ENCODE measurements at regions of chr5 and their contacts with region 1.

Region 1: DNA sequence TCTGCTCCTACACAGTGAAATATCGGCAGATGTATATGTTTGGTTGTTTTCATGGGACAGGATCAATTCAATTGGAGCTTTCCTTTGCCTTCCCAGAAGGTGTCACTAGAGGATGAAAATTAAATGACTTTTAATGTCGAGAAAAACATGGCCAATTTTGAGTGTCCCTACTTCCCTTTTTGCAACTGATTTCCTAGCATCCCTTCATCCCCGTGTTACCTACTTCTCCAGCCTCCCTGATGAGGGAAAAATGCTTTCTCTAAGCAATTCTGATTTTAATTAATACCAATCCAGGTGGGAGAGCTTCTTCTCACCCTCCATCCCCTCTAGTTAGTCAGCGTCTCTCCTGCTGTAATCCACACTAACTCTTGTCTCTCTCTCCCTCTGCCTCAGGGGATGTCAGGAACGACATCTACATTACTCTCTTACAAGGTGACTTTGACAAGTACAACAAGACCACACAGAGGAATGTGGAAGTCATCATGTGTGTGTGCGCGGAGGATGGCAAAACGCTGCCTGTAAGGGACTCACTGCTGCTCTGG is 64.9 kb downstream of the DOCK2 start:
- DNase-seq: no peak
- H3K4me3 Mint-ChIP-seq: no peak overlapping the region
- H3K27ac Mint-ChIP-seq: peak overlapping the region; percentile 59
- H3K4me1 Mint-ChIP-seq: peaks cover 41% of the 10 kb centered on the region
- H3K27me3 Mint-ChIP-seq: no peaks in the 10 kb centered on the region

Region 2: DNA sequence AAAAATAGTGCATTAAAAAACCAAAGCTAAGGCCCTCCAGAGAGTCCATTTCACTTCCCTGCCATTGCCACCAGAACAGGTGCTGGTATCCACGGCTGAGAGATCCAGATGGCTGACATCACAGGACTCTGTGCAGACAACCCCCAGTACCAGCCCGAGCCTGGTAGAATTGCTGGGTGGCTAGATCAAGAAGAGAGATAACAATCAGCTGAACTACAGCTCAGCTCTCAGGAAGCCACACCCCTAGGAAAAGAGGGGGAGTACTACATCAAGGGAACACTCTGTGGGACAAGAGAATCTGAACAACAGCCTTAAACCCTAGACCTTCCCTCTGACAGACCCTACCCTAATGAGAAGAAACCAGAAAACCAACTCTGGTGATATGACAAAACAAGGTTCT is 327.2 kb before region 1 on chr5:
- CTCF ChIA-PET with region 1: no interaction called
- intact Hi-C with region 1: no loop called
- DNase-seq: no peak
- H3K4me3 Mint-ChIP-seq: no peak overlapping the region
- H3K27ac Mint-ChIP-seq: no peak overlapping the region
- H3K4me1 Mint-ChIP-seq: no peaks in the 10 kb centered on the region
- H3K27me3 Mint-ChIP-seq: no peaks in the 10 kb centered on the region

Region 3: GRCh38 chr5:169650701-169651331 is 51.2 kb before region 1 on chr5:
- CTCF ChIA-PET with region 1: no interaction called
- intact Hi-C with region 1: loop called (anchors 1 kb)
- DNase-seq: peak; percentile 64
- H3K4me3 Mint-ChIP-seq: peak overlapping the region; percentile 49
- H3K27ac Mint-ChIP-seq: peak overlapping the region; percentile 94
- H3K4me1 Mint-ChIP-seq: peaks cover 92% of the 10 kb centered on the region
- H3K27me3 Mint-ChIP-seq: no peaks in the 10 kb centered on the region

Region 4: GRCh38 chr5:169670769-169671525 is 31.0 kb before region 1 on chr5:
- CTCF ChIA-PET with region 1: no interaction called
- intact Hi-C with region 1: loop called (anchors 2 kb)
- DNase-seq: peak; percentile 58
- H3K4me3 Mint-ChIP-seq: no peak overlapping the region
- H3K27ac Mint-ChIP-seq: no peak overlapping the region
- H3K4me1 Mint-ChIP-seq: peaks cover 16% of the 10 kb centered on the region
- H3K27me3 Mint-ChIP-seq: no peaks in the 10 kb centered on the region

Region 5: GRCh38 chr5:169980418-169981053 is 278.6 kb after region 1 on chr5 and contains the start of gene INSYN2B:
- CTCF ChIA-PET with region 1: no interaction called
- intact Hi-C with region 1: loop called (anchors 2 kb)
- DNase-seq: peak; percentile 59
- H3K4me3 Mint-ChIP-seq: no peak within 1 kb of the TSS
- H3K27ac Mint-ChIP-seq: no peak within 1 kb of the TSS
- H3K4me1 Mint-ChIP-seq: no peaks in the 10 kb centered on the region
- H3K27me3 Mint-ChIP-seq: no peaks in the 10 kb centered on the region
- total RNA-seq, gene INSYN2B: not detected

Region 6: DNA sequence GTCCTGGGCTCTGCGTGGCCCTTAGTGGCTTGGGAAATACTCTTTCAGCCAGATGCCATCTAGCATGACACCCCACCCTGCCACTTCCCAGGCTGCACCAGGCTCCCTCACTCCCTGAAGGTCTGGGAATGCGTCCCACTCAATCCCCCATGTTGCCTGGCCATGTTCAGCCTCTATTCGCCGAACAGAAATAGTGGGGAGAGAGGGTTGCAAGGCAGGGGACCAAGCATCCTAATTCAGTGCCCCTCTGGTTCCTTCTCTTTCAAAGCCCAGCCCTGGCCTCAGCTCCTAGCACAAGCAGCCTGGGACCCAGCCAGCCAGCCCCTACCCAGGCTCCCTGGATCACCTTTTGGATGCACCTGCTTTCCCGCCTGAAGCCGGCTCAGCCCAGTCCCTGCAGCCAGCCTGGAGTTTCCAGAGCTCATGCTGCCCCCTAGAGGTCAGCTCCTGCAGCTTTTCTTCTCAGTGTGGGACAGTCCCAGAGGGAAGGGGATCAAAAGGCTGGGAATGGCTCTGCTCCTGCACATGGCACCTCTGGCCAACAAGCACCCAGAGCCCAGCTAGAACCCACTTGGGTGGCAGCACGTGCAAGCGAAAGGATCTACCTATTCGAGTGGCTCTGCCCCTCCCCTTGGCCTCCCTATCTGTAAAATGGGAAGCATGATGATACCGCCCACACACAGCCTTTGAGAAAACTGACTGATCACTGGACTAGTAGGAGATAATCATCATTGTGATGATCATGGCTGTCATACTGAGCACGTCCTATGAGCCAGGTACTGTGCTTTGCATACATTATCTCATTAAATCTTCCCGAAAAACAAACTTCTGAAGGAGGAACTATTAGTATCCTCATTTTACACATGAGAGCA is 482.1 kb after region 1 on chr5:
- CTCF ChIA-PET with region 1: no interaction called
- intact Hi-C with region 1: loop called (anchors 1 kb)
- DNase-seq: peak; percentile 76
- H3K4me3 Mint-ChIP-seq: no peak overlapping the region
- H3K27ac Mint-ChIP-seq: no peak overlapping the region
- H3K4me1 Mint-ChIP-seq: no peaks in the 10 kb centered on the region
- H3K27me3 Mint-ChIP-seq: no peaks in the 10 kb centered on the region

Region 7: DNA sequence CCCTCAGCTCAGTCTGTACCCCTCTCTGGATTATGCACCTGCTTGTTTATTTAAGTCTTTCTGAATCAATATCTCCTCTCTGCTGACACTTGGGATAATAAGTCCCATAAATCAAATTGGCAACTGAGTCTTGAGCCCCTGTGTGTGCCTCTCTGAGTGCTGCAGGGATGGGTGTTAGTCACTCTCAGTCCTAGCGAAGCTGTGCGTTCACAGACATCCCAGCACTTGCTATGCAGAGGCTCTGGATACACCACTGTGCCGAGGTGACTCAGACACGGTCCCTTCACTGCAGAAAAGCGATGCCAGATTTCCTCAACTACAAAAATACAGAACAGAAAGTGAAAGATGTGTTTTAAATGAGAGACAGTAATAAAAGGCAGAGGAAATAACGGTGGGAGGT is 691.3 kb after region 1 on chr5:
- CTCF ChIA-PET with region 1: no interaction called
- intact Hi-C with region 1: loop called (anchors 1 kb)
- DNase-seq: peak; percentile 80
- H3K4me3 Mint-ChIP-seq: peak overlapping the region; percentile 3
- H3K27ac Mint-ChIP-seq: peak overlapping the region; percentile 3
- H3K4me1 Mint-ChIP-seq: peaks cover 26% of the 10 kb centered on the region
- H3K27me3 Mint-ChIP-seq: no peaks in the 10 kb centered on the region